Panc1 (cell line): ENCODE measurements at regions of chr4 and their contacts with region 1.

Region 1: DNA sequence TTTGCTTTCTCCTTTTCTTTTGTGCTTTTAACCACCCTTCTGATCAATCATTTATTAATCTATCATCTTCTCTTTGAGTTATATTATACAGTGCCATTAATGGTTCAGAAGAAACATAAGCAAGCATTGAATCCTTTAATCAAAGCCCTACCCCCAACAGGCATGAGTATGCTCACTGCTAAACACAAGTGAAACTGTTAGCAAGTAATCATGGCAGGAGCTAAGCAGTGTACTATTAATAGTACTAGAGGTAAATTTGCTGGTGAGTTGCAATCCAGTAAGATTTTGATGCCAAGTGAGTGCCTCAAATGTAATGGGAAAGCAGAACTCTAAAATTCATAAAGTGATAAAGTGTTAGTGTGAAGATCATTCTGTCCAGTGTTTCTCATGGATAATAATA is 57.2 kb downstream of the FNIP2 start:
- DNase-seq: no peak
- ATAC-seq: no peak
- H3K4me3 ChIP-seq: no peak overlapping the region
- H3K27ac ChIP-seq: no peak overlapping the region
- H3K4me1 ChIP-seq: peaks cover 16% of the 10 kb centered on the region
- H3K27me3 ChIP-seq: no peaks in the 10 kb centered on the region
- CTCF ChIP-seq: no peak

Region 2: DNA sequence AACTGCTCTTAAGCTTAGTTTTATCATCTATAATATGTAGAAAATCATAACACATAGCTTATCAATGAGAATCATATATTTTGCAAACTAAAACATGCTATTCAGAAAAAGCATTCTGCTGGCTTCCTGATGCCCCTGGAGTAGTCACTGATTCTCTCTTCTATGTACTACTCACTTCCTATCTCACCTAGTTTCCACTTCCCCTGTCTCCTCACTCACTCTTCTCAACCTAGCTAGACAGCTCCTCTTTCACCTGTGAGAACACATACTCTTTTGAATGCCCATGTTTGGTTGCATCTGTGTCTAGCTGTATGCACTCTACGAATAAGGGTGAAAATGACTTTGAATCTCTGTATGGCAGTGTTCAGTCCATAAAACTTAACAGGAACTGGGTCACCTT is 606.4 kb before region 1 on chr4:
- CTCF ChIA-PET with region 1: no interaction called
- POLR2A ChIA-PET with region 1: no interaction called
- in situ Hi-C with region 1: no loop called
- intact Hi-C with region 1: no loop called
- DNase-seq: no peak
- ATAC-seq: no peak
- H3K4me3 ChIP-seq: no peak overlapping the region
- H3K27ac ChIP-seq: no peak overlapping the region
- H3K4me1 ChIP-seq: no peaks in the 10 kb centered on the region
- H3K27me3 ChIP-seq: no peaks in the 10 kb centered on the region
- CTCF ChIP-seq: no peak

Region 3: DNA sequence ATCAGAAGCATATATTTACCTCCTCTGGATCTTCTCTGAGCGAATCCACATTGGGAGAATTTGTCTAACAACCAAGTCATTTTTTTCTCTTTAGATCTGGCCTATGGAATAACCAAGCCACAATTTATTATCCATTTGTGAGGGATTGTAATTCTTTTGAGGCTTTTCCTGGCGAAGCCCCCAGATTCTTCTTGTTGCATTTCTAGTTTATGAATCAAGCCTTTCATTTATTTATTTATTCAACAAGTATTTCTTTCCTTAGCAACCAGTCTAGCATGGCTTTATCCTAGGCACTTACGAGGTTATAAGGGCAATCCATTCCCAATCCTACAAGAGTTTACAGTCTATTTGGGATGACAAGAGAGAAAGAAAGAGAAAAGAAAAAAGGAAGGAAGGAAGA is 75.7 kb before region 1 on chr4:
- CTCF ChIA-PET with region 1: no interaction called
- POLR2A ChIA-PET with region 1: interaction called, 13 read pairs
- in situ Hi-C with region 1: no loop called
- intact Hi-C with region 1: no loop called
- DNase-seq: no peak
- ATAC-seq: no peak
- H3K4me3 ChIP-seq: no peak overlapping the region
- H3K27ac ChIP-seq: no peak overlapping the region
- H3K4me1 ChIP-seq: no peaks in the 10 kb centered on the region
- H3K27me3 ChIP-seq: no peaks in the 10 kb centered on the region
- CTCF ChIP-seq: no peak